ENCODE measurements at regions of chr1 and their contacts with region 1.

Region 1: GRCh38 chr1:36149237-36149972 is at the start of gene TRAPPC3:
- DNase-seq: peak; percentile 97 to 99
- H3K4me3 ChIP-seq: peak within 1 kb of the TSS; percentile 60
- H3K4me3 Mint-ChIP-seq: peak within 1 kb of the TSS; percentile 99
- H3K27ac Mint-ChIP-seq: peak within 1 kb of the TSS; percentile 100
- H3K4me1 ChIP-seq: peaks cover 10% of the 10 kb centered on the region
- H3K4me1 Mint-ChIP-seq: no peaks in the 10 kb centered on the region
- H3K27me3 ChIP-seq: no peaks in the 10 kb centered on the region
- H3K27me3 Mint-ChIP-seq: no peaks in the 10 kb centered on the region
- CTCF ChIP-seq: peak; percentile 63 to 77
- total RNA-seq, gene TRAPPC3: 35.4 and 37.9 TPM in 2 replicates

Region 2: DNA sequence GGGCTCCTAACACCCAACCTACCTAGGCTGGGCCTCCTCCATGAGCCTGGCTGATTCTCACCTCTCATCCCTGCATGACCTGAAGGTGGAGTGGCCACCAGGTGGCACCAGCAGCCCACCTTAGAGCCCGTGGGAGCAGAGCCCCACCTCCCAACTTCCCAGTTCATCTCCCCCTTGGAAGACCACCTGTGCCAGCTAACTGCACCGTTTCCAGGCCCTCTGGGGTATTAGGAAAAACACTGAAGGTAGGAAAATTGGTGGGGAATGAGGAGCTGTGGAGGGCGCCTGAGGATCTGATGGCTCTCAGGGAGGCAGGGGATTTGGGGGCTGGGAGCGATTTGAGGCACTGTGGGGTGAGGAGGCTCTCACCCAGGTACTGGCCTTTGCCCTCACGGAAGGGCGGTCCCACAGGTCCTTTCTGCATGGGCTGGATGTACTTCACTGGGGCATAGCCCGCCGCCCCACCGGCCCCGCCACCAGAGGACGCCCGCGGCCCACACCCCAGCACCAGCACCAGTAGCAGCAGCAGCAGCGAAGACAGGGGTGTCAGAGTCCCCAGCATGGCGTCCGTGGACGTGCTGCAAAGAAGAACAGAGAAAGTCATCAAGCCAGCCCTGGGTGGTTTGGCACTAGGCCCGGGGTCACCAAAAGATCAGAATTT is 49.6 kb before region 1 on chr1:
- CTCF ChIA-PET with region 1: interaction called, 4 read pairs
- POLR2A ChIA-PET with region 1: no interaction called
- intact Hi-C with region 1: loop called (anchors 5 kb)
- DNase-seq: peak; percentile 73 to 78
- H3K4me3 ChIP-seq: no peak overlapping the region
- H3K4me3 Mint-ChIP-seq: no peak overlapping the region
- H3K27ac Mint-ChIP-seq: no peak overlapping the region
- H3K4me1 ChIP-seq: no peaks in the 10 kb centered on the region
- H3K4me1 Mint-ChIP-seq: no peaks in the 10 kb centered on the region
- H3K27me3 ChIP-seq: no peaks in the 10 kb centered on the region
- H3K27me3 Mint-ChIP-seq: no peaks in the 10 kb centered on the region
- CTCF ChIP-seq: peak; percentile 78 to 79

Region 3: GRCh38 chr1:36115200-36115669 is 34.2 kb before region 1 on chr1:
- CTCF ChIA-PET with region 1: no interaction called
- POLR2A ChIA-PET with region 1: no interaction called
- intact Hi-C with region 1: no loop called
- DNase-seq: no peak
- H3K4me3 ChIP-seq: no peak overlapping the region
- H3K4me3 Mint-ChIP-seq: no peak overlapping the region
- H3K27ac Mint-ChIP-seq: no peak overlapping the region
- H3K4me1 ChIP-seq: no peaks in the 10 kb centered on the region
- H3K4me1 Mint-ChIP-seq: no peaks in the 10 kb centered on the region
- H3K27me3 ChIP-seq: no peaks in the 10 kb centered on the region
- H3K27me3 Mint-ChIP-seq: no peaks in the 10 kb centered on the region
- CTCF ChIP-seq: no peak

Region 4: GRCh38 chr1:36187800-36188593 is 38.6 kb after region 1 on chr1:
- CTCF ChIA-PET with region 1: interaction called, 13 read pairs
- POLR2A ChIA-PET with region 1: no interaction called
- intact Hi-C with region 1: loop called (anchors 1 kb)
- DNase-seq: peak; percentile 74 to 80
- H3K4me3 ChIP-seq: no peak overlapping the region
- H3K4me3 Mint-ChIP-seq: peak overlapping the region; percentile 37
- H3K27ac Mint-ChIP-seq: peak overlapping the region; percentile 76
- H3K4me1 ChIP-seq: no peaks in the 10 kb centered on the region
- H3K4me1 Mint-ChIP-seq: peaks cover 7% of the 10 kb centered on the region
- H3K27me3 ChIP-seq: no peaks in the 10 kb centered on the region
- H3K27me3 Mint-ChIP-seq: no peaks in the 10 kb centered on the region
- CTCF ChIP-seq: peak; percentile 61 to 73

Region 5: GRCh38 chr1:36217670-36218069 is 68.3 kb after region 1 on chr1:
- CTCF ChIA-PET with region 1: no interaction called
- POLR2A ChIA-PET with region 1: no interaction called
- intact Hi-C with region 1: loop called (anchors 1 kb)
- DNase-seq: no peak
- H3K4me3 ChIP-seq: no peak overlapping the region
- H3K4me3 Mint-ChIP-seq: no peak overlapping the region
- H3K27ac Mint-ChIP-seq: no peak overlapping the region
- H3K4me1 ChIP-seq: no peaks in the 10 kb centered on the region
- H3K4me1 Mint-ChIP-seq: no peaks in the 10 kb centered on the region
- H3K27me3 ChIP-seq: no peaks in the 10 kb centered on the region
- H3K27me3 Mint-ChIP-seq: no peaks in the 10 kb centered on the region
- CTCF ChIP-seq: no peak

Region 6: GRCh38 chr1:36223993-36224536 is 74.7 kb after region 1 on chr1 and contains the start of gene THRAP3:
- CTCF ChIA-PET with region 1: interaction called, 9 read pairs
- POLR2A ChIA-PET with region 1: interaction called, 3 read pairs
- intact Hi-C with region 1: loop called (anchors 1 kb)
- DNase-seq: peak; percentile 98
- H3K4me3 ChIP-seq: peak within 1 kb of the TSS; percentile 58
- H3K4me3 Mint-ChIP-seq: peak within 1 kb of the TSS; percentile 99
- H3K27ac Mint-ChIP-seq: peak within 1 kb of the TSS; percentile 98
- H3K4me1 ChIP-seq: peaks cover 5% of the 10 kb centered on the region; the same call in 1 of the 2 replicates
- H3K4me1 Mint-ChIP-seq: peaks cover 7% of the 10 kb centered on the region
- H3K27me3 ChIP-seq: no peaks in the 10 kb centered on the region
- H3K27me3 Mint-ChIP-seq: no peaks in the 10 kb centered on the region
- CTCF ChIP-seq: no peak
- total RNA-seq, gene THRAP3: 86.8 and 89.1 TPM in 2 replicates

Region 7: DNA sequence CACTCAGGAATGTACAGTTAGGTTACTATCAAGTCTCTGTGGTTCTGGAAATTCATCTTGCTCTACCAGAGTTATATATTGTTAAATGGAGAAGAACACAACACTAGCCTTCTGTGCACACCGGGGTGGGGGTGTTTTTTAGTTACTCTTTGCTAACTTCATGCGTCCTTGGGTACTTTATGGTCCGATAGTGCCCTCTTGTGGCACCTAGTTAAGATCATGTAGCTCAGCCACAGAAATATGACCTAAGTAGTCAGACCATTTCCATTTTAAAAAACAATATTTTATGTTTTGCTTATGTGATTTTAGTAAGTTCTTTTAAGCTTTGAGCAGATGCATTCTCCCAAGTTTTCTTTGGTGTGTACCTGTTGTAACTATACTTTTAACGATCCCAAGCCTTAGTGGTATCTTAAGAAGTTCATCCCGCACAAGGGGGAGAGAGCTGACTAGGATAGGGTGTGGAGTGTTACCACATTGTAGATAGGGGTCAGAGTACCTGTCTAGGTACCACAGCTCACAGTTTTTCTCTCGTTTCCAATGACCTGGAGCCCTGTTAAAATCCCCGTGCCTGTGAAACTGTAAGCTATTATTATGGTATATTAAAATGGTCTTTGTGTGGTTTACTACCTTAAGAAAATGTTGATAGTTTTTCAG is 136.2 kb after region 1 on chr1:
- CTCF ChIA-PET with region 1: interaction called, 13 read pairs
- POLR2A ChIA-PET with region 1: interaction called, 3 read pairs
- intact Hi-C with region 1: loop called (anchors 1 kb)
- DNase-seq: peak; percentile 52 to 58
- H3K4me3 ChIP-seq: no peak overlapping the region
- H3K4me3 Mint-ChIP-seq: no peak overlapping the region
- H3K27ac Mint-ChIP-seq: no peak overlapping the region
- H3K4me1 ChIP-seq: no peaks in the 10 kb centered on the region
- H3K4me1 Mint-ChIP-seq: no peaks in the 10 kb centered on the region
- H3K27me3 ChIP-seq: no peaks in the 10 kb centered on the region
- H3K27me3 Mint-ChIP-seq: no peaks in the 10 kb centered on the region
- CTCF ChIP-seq: peak; percentile 45 to 62

Measured in Caco-2 (cell line).